Activated T-helper 2 cell treated with anti-CD3 and anti-CD28 coated beads, Interferon-gamma antibody, Interleukin-2, Interleukin-4, amounts not matched to agents 10 μg/mL and 5 μg/mL and 100 μg/mL, durations not matched to agents 14 hours and 24 hours and 36 hours (primary cell): ENCODE measurements at regions of chr19 and their contacts with region 1.

Region 1: GRCh38 chr19:52942386-52943133 is 19.3 kb upstream of the ZNF888 start:
- DNase-seq: peak; percentile 95
- H3K4me3 Mint-ChIP-seq: peak overlapping the region; percentile 90
- H3K27ac Mint-ChIP-seq: peak overlapping the region; percentile 89
- H3K4me1 Mint-ChIP-seq: peaks cover 21% of the 10 kb centered on the region
- H3K27me3 Mint-ChIP-seq: no peaks in the 10 kb centered on the region

Region 2: GRCh38 chr19:52897144-52897935 is 45.2 kb before region 1 on chr19 and contains the start of gene ZNF320:
- intact Hi-C with region 1: loop called (anchors 1 kb)
- DNase-seq: peak; percentile 89
- H3K4me3 Mint-ChIP-seq: peak within 1 kb of the TSS; percentile 89
- H3K27ac Mint-ChIP-seq: peak within 1 kb of the TSS; percentile 90
- H3K4me1 Mint-ChIP-seq: no peaks in the 10 kb centered on the region
- H3K27me3 Mint-ChIP-seq: no peaks in the 10 kb centered on the region
- total RNA-seq, gene ZNF320: 8.8 and 9.1 TPM in 2 replicates

Region 3: DNA sequence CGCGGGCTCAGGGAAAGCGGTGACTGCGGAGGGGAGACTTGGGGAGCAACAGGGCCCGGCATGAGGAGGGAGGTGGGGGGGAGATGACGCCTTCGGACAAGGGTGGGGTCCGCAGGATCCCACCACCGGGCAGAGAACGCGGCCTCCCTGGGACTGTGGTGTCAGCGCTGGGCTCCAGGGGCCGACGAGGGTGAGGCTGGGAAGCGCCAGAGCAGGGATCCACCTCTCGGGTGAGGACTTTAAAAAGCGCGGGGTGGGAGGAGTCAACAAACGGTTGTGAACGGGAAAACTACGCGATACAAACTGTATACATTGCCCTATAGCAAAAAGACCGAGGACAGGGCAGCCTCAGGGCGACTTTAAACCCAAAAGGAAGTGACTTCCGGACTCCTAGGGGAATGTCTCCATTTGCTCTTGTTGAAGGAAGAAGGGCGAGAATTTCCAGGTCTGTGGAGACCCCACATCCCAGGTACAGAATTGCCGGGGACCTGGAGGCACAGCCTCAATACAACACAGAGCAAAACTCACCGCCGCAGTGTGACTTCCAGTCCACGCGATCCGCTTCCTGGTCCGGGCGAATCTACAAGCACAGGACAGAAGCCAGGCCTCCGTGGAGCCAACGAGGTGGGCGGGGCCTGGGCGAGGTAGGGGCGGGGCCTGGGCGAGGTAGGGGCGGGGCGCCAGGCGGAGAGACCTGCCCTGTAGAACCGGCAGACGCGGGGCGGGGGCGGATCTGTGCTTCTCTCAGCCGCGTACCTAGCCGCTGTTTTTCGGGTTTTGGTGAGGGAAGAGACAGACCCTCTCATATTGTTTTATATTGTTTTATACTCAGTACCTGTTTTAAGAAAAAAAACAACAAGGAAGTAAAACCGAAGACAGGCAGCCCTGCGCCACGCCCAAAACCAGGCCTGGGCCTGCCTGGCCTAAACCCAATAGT is 19.5 kb before region 1 on chr19 and contains the start of gene ZNF888:
- intact Hi-C with region 1: loop called (anchors 2 kb)
- DNase-seq: peak; percentile 81
- H3K4me3 Mint-ChIP-seq: peak within 1 kb of the TSS; percentile 92
- H3K27ac Mint-ChIP-seq: peak within 1 kb of the TSS; percentile 90
- H3K4me1 Mint-ChIP-seq: peaks cover 21% of the 10 kb centered on the region
- H3K27me3 Mint-ChIP-seq: no peaks in the 10 kb centered on the region
- total RNA-seq, gene ZNF888: 5.0 and 6.1 TPM in 2 replicates

Region 4: GRCh38 chr19:53103198-53103944 is 160.8 kb after region 1 on chr19 and contains the start of gene ZNF160:
- intact Hi-C with region 1: loop called (anchors 5 kb)
- DNase-seq: peak; percentile 99
- H3K4me3 Mint-ChIP-seq: peak within 1 kb of the TSS; percentile 87
- H3K27ac Mint-ChIP-seq: peak within 1 kb of the TSS; percentile 84
- H3K4me1 Mint-ChIP-seq: peaks cover 19% of the 10 kb centered on the region
- H3K27me3 Mint-ChIP-seq: no peaks in the 10 kb centered on the region
- total RNA-seq, gene ZNF160: 35.3 and 39.3 TPM in 2 replicates

Region 5: GRCh38 chr19:53394974-53395839 is 452.6 kb after region 1 on chr19 and contains the start of gene ZNF765:
- intact Hi-C with region 1: loop called (anchors 10 kb)
- DNase-seq: peak; percentile 91
- H3K4me3 Mint-ChIP-seq: peak within 1 kb of the TSS; percentile 98
- H3K27ac Mint-ChIP-seq: peak within 1 kb of the TSS; percentile 83
- H3K4me1 Mint-ChIP-seq: peaks cover 19% of the 10 kb centered on the region
- H3K27me3 Mint-ChIP-seq: no peaks in the 10 kb centered on the region
- total RNA-seq, gene ZNF765: 10.5 TPM in 2 replicates